Cardiac septum (tissue), 1 donor: ENCODE measurements at regions of chr11 and their contacts with region 1.

Region 1: DNA sequence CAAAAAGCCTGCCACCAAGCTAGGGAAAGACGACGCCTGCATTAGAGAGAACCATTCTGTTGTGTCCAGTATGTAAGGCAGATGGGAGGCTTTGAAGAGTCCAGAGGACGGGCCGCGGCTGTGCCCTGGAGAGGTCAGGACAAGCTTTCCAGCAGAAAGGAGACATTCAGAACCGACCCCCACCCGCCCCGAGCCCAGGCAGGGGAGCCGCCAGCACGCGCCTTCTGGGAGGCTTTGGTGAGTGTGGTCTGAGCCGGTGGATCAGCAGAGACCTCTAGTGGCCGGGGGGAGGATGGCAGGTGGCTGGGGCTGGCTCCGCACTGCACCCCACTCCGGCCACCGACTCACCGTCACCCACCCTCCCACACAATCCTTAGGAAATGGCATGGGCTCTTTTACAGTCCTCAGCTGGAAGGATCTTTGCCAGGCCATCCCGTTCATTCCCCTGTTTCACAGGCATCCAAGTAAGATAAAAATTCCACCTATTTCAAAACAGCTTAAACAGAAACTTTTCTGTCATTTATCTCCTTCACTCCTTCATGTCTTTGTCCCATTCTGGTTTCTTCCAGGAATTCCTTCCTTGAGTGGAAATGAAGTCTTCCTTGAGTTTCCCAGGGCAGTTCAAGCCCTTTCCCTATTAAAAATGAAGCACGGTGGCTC is 91.2 kb downstream of the FEZ1 start:
- DNase-seq: peak; percentile 88

Region 2: DNA sequence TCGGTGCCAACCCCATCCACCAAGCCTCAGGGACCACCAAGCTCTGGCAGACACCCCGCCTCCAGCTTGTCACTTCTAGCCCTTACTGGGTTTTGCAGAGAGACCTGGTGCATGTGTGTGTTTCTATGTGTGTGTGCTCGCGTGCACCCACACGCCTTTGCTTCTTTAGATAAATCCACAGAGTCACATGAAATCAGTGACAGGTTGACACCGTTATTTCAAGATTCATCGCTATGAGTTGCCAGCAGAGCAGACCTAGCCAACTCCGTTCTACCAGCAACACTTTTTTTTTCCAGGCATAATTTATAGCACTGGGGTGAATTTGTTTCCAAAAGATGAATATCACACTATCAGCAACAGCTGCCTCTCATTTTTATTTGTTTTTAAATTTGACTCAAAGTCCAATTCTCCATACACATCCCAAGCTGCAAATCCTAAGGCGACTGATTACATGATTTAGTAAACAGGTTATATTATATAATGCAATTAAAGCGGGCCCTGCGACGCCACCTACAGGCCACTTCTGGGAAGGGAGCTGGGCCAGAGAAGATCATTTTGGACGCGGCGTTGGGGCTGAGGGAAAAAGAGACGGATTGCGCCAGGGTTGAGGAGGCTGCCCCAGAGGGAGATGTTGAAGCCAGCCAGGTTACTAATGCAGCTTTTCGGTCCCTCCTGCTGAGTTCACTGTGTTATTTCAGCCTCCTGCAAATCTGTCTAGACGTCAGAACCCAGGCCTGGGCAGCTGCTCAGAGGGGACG is 59.3 kb before region 1 on chr11:
- intact Hi-C with region 1: loop called (anchors 5 kb)
- DNase-seq: peak; percentile 87